Ascending aorta (tissue), 2 donors: ENCODE measurements at regions of chr2 and their contacts with region 1.

Region 1: DNA sequence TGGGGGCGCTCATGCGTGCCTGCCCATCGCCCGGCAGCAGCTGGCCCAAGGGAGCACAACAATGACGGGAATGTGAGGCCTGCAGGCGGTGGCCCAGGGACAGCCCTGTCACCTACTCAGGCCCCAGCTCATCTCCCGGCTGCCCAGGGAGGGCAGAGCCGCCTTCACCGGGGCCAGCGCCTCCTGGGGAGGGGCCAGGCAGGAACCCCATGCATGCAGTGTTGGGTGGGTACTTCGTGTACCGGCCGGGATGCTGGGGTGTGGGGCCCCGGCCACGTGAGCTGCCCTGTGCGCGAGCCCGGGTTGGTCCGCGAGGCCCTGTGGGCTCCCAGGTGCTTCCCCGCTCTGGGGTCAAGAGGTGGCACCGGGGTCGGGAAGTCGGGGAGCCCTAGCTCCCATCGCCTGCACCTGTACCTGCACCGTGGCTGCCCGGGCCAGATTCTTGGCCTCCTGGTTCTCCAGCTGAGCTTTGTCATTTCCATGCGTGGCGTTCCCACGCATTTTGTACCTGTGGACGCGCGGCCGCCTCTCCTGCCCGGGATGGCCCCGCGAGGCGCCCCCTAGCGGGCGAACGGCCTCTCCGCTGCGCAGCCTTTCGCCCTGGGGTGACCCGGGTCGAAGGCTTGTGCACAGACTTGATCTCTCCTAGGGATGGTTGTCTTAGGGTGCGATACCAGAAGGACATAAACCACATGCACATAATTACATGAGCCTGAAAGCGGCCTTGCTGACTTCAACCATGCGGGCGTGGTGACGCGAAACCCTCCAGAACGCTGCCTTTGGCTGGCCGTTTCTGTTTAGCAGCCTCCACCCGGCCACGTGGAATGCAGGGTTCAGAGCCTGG is 950 bp downstream of the KLHL30 start:
- DNase-seq: no peak
- H3K4me3 ChIP-seq: peak overlapping the region; percentile 54 to 65
- H3K27ac ChIP-seq: peak overlapping the region; percentile 75 to 80
- H3K4me1 ChIP-seq: peaks cover 19 to 52% of the 10 kb centered on the region in 2 donors
- H3K27me3 ChIP-seq: no peaks in the 10 kb centered on the region
- CTCF ChIP-seq: peak; percentile 47 to 69 (median 49)

Region 2: DNA sequence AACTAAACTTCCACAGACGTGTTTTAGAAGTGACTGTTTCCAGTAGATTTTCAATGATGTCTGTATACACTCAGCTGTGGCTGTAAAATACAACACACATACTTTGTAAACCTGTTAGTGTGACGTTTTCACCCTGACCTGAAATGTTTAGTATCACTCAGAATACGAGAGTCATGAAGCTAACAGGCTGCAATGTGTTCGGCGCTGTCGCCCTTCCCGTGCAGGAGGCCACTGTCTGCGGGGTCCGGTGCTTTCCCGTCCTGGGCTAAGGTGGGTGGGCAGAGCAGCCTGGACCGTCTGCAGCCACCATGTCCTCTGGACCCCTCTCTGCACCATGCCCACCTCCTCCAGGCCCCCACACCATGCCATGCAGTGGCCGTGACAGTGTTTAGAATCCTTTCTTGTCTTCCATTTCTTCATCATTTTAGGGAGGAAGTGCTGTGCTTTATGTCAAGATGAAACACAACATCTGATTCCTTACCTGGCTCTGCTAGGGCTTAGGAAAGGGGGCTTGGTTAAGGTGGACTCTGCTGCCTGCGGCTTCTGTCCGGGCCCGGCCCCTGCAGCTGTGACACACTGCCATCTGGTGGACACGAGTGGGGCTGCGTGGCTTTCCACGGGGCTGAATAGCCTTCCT is 394.7 kb before region 1 on chr2:
- intact Hi-C with region 1: no loop called
- DNase-seq: peak in 1 of 2 donors; percentile 89
- H3K4me3 ChIP-seq: peak overlapping the region in 1 of 2 donors; percentile 13
- H3K27ac ChIP-seq: peak overlapping the region; percentile 42 to 87
- H3K4me1 ChIP-seq: peaks cover 15 to 41% of the 10 kb centered on the region in 2 donors
- H3K27me3 ChIP-seq: no peaks in the 10 kb centered on the region
- CTCF ChIP-seq: peak; percentile 90 to 97 (median 95)

Region 3: GRCh38 chr2:238127317-238128200 is 11.9 kb before region 1 on chr2:
- intact Hi-C with region 1: no loop called
- DNase-seq: no peak
- H3K4me3 ChIP-seq: no peak overlapping the region
- H3K27ac ChIP-seq: no peak overlapping the region
- H3K4me1 ChIP-seq: no peaks in the 10 kb centered on the region
- H3K27me3 ChIP-seq: no peaks in the 10 kb centered on the region
- CTCF ChIP-seq: peak in 2 of 3 experiments; percentile 7 to 20

Region 4: GRCh38 chr2:238169708-238170251 is 30.4 kb after region 1 on chr2:
- intact Hi-C with region 1: loop called (anchors 2 kb)
- DNase-seq: peak in 1 of 2 donors; percentile 88
- H3K4me3 ChIP-seq: no peak overlapping the region
- H3K27ac ChIP-seq: peak overlapping the region; percentile 85 to 91
- H3K4me1 ChIP-seq: peaks cover 8 to 34% of the 10 kb centered on the region in 2 donors
- H3K27me3 ChIP-seq: no peaks in the 10 kb centered on the region
- CTCF ChIP-seq: no peak